Ascending aorta (tissue), 2 donors: ENCODE measurements at regions of chr11 and their contacts with region 1.

Region 1: DNA sequence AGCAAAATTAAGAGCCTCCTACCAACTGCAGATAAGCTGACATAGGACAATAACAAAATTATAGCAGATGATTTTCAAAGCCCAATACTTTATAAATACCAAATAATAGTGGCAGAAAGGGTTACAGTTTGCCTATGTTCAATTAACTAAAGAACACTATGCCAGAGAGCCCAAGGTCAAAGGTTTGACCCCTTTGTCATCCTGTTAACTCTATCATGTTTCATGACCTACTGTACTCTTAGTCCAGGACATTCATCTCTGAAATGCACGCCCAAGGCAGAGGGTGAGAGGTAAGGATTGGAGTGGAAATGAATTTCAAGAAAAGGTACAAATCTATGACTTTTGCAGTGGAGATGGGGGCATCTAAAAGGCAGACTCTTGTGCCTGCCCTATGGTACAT is 70.6 kb downstream of the DDIAS start:
- DNase-seq: no peak
- H3K4me3 ChIP-seq: no peak overlapping the region
- H3K27ac ChIP-seq: no peak overlapping the region
- H3K4me1 ChIP-seq: no peaks in the 10 kb centered on the region
- H3K27me3 ChIP-seq: no peaks in the 10 kb centered on the region
- CTCF ChIP-seq: no peak

Region 2: GRCh38 chr11:82959987-82960778 is 11.9 kb before region 1 on chr11:
- intact Hi-C with region 1: loop called (anchors 1 kb)
- DNase-seq: no peak
- H3K4me3 ChIP-seq: no peak overlapping the region
- H3K27ac ChIP-seq: no peak overlapping the region
- H3K4me1 ChIP-seq: no peaks in the 10 kb centered on the region
- H3K27me3 ChIP-seq: no peaks in the 10 kb centered on the region
- CTCF ChIP-seq: no peak

Region 3: DNA sequence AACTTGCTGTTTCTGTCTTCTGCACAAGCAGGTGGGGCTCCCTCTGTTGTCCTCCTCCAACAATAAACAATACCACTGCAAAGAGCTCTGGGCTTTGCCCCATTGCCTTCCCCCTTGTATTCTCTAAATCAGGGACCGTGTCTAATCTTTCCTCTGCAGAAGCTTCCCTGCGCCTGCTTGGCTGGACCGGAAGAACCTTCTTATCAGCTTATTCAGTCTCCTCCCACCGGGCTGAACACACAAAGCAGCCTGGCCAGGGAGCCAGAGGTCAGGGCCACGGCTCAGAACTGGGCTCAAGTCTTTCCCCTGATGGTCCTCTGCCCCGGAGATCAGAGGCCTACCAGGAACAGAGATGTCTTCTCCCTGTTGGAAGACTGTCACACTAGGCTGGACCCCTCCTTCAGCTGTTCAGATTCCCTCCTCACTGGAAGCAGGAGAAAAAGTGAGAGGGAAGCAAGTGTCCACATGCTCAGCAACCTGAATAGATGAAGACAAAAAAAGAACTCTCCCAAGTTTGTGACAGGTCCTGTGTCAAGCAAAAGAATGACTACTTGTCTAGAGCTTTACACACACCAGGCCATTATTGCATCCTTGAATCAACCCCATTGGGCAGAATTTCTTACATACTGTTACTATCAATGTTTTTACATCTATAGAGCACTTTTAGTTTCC is 35.9 kb after region 1 on chr11:
- intact Hi-C with region 1: no loop called
- DNase-seq: no peak
- H3K4me3 ChIP-seq: peak overlapping the region in 1 of 2 donors; percentile 18
- H3K27ac ChIP-seq: peak overlapping the region; percentile 52 to 58
- H3K4me1 ChIP-seq: peaks cover 5 to 20% of the 10 kb centered on the region in 2 donors
- H3K27me3 ChIP-seq: no peaks in the 10 kb centered on the region
- CTCF ChIP-seq: no peak